Activated CD8-positive, alpha-beta T cell treated with anti-CD3 and anti-CD28 coated beads, Interleukin-2, amount 10 ng/mL, durations not matched to agents 7 days and 5 days (primary cell): ENCODE measurements at regions of chr11 and their contacts with region 1.

Region 1: DNA sequence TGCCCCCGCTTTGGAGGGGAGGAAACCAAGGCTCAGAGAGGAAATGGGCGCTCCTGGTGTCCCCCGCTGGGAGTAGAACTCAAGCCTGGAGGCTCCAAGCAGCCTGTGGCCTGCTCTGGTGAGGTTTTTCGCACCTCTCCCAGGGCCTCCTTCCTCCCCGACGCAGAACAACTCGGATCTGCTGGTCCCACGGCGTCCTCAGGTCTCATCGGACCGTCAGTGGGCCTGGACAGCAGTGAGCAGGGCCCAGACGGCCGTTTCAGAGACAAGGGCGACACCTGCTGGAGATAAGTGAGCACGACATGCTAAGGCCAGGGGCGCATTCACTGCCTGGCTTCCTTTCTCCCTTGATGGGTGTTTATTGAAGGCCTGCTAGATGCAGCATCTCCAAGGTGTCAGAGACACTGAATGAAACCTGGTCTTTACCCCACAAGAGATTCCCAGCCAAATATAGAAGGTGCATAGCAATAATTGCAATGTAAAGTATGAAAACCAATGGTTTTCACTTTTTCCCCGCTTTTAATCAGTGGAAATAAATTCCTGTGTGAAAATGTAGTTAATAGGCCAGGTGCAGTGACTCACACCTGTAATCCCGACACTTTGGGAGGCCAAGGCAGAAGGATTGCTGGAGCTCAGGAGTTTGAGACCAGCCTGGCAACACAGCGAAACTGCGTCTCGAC is 26.9 kb upstream of the CD82 start:
- DNase-seq: peak; percentile 82
- ATAC-seq: peak; percentile 90
- H3K4me3 Mint-ChIP-seq: no peak overlapping the region
- H3K27ac Mint-ChIP-seq: no peak overlapping the region
- H3K4me1 Mint-ChIP-seq: no peaks in the 10 kb centered on the region
- H3K27me3 Mint-ChIP-seq: peaks cover 8% of the 10 kb centered on the region

Region 2: GRCh38 chr11:44286268-44286880 is 252.1 kb before region 1 on chr11:
- CTCF ChIA-PET with region 1: interaction called, 26 read pairs
- POLR2A ChIA-PET with region 1: no interaction called
- DNase-seq: peak; percentile 71
- ATAC-seq: peak; percentile 79
- H3K4me3 Mint-ChIP-seq: no peak overlapping the region
- H3K27ac Mint-ChIP-seq: no peak overlapping the region
- H3K4me1 Mint-ChIP-seq: no peaks in the 10 kb centered on the region
- H3K27me3 Mint-ChIP-seq: peaks cover 7% of the 10 kb centered on the region

Region 3: DNA sequence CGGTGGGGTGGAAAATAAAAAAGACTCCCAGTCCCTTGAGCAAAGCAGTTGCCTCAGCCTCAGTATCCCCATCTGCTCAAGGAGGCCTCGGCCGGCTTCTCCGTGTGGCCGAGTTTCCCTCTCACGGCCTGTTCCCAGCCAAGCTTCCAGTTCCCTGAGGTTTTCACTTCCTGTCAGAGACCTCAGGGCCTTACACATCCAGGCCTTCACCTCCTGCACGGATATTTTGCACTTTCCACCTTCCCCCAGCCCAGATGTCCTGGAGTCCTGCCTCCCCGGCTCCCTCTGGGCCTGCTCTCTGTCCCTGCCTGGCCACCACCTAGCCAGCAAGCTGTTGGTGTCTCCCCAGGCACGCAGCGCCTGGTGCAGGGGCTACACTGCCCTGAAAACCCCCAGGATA is 14.2 kb before region 1 on chr11:
- CTCF ChIA-PET with region 1: interaction called, 16 read pairs
- POLR2A ChIA-PET with region 1: no interaction called
- DNase-seq: no peak
- ATAC-seq: no peak
- H3K4me3 Mint-ChIP-seq: no peak overlapping the region
- H3K27ac Mint-ChIP-seq: no peak overlapping the region
- H3K4me1 Mint-ChIP-seq: peaks cover 9% of the 10 kb centered on the region
- H3K27me3 Mint-ChIP-seq: peaks cover 13% of the 10 kb centered on the region